ENCODE measurements at regions of chr2 and their contacts with region 1.

Region 1: GRCh38 chr2:218180467-218181114 is 13.8 kb upstream of the CXCR1 start:
- DNase-seq: no peak
- CTCF ChIP-seq: no peak

Region 2: DNA sequence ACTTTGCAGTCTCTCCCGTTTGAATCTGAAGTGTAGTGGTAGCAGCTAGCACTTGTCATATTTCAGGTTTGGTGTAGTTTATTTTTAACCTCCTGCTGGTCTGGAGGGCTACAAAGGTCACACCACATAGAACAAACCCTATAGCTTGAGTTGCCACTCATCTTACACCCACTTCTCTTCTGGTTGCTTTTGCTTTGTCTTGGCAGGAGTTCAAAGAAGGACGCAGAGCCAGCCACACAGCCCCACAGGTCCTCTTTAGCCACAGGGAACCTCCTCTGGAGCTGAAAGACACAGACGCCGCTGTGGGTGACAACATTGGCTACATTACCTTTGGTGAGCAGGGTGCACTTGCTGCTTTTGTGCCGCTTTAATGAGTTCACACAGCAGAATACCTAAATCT is 64.6 kb after region 1 on chr2:
- in situ Hi-C with region 1: loop called (anchors 5 kb)
- DNase-seq: no peak
- CTCF ChIP-seq: no peak

Measured in GM13976 (cell line).